Head of caudate nucleus (tissue), 42 donors: ENCODE measurements at regions of chr15 and their contacts with region 1.

Region 1: GRCh38 chr15:78308422-78309032 is 9.1 kb upstream of the SKIC8 start:
- DNase-seq: peak; percentile 68 to 91 (median 82)

Region 2: GRCh38 chr15:77983708-77984445 is 324.6 kb before region 1 on chr15:
- intact Hi-C with region 1: no loop called
- DNase-seq: peak in 3 of 42 donors; percentile 10 to 21 (median 11)

Region 3: GRCh38 chr15:78192826-78193594 is 115.5 kb before region 1 on chr15:
- intact Hi-C with region 1: no loop called
- DNase-seq: peak in 9 of 42 donors; percentile 1 to 21 (median 9)

Region 4: DNA sequence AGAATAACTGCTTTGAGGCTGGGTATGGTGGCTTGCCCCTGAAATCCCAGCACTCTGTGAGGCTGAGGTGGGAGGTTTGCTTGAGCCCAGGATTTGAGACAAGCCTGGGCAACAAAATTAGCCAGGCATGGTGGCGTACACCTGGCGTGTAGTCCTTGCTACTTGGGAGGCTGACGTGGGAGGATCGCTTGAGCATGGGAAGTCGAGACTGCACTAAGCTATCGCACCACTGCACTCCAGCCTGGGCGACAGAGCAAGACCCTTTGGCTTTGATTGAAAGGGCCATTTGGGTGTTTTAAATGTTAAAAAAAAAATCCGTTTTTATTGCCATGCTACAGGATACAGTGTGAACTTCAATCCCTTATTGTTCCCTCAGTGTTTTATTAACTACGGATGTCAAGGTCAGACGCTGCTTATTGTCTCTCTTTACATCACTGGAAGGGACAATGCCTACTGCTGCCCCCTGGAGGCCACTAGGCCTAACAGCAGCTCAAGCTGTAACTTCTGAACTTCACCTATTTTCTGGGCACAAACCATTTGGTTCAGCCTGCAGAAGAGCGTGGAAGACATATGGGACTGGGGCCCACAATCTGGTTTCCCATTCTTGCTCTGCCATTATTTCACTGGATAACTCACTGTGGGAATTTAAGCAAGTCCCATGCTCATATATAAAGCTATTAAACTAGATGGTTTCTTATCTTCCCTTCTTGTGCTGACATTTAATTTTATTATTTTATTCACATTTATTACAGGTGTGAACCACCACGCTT is 114.2 kb after region 1 on chr15:
- intact Hi-C with region 1: loop called (anchors 5 kb)
- DNase-seq: peak in 41 of 42 donors; percentile 54 to 91 (median 75)

Region 5: GRCh38 chr15:78481917-78482316 is 173.4 kb after region 1 on chr15:
- intact Hi-C with region 1: loop called (anchors 5 kb)
- DNase-seq: no peak